ENCODE measurements at regions of chr20 and their contacts with region 1.

Region 1: GRCh38 chr20:43749734-43750294 is 23.0 kb upstream of the GTSF1L start:
- DNase-seq: peak; percentile 50 to 94 (median 72)
- ATAC-seq: peak; percentile 85
- H3K4me3 ChIP-seq: no peak overlapping the region
- H3K4me3 Mint-ChIP-seq: peak overlapping the region in 6 of 10 donors; percentile 29 to 54 (median 46)
- H3K27ac ChIP-seq: no peak overlapping the region
- H3K27ac Mint-ChIP-seq: peak overlapping the region in 6 of 9 donors; percentile 28 to 81 (median 51)
- H3K4me1 ChIP-seq: peaks cover 15 to 18% of the 10 kb centered on the region in 2 donors
- H3K4me1 Mint-ChIP-seq: peaks cover 22 to 44% (median 38%) of the 10 kb centered on the region in 7 donors
- H3K27me3 ChIP-seq: no peaks in the 10 kb centered on the region
- H3K27me3 Mint-ChIP-seq: peaks cover 0 to 18% (median 0%) of the 10 kb centered on the region in 5 donors

Region 2: GRCh38 chr20:43691928-43692524 is 57.8 kb before region 1 on chr20:
- CTCF ChIA-PET with region 1: interaction called, 6 read pairs
- POLR2A ChIA-PET with region 1: no interaction called
- intact Hi-C with region 1: loop called in 1 of 2 experiments (anchors 1 kb)
- DNase-seq: peak in 8 of 9 donors; percentile 12 to 62 (median 26)
- ATAC-seq: peak; percentile 73
- H3K4me3 ChIP-seq: no peak overlapping the region
- H3K4me3 Mint-ChIP-seq: no peak overlapping the region
- H3K27ac ChIP-seq: no peak overlapping the region
- H3K27ac Mint-ChIP-seq: peak overlapping the region in 1 of 9 donors; percentile 36
- H3K4me1 ChIP-seq: no peaks in the 10 kb centered on the region
- H3K4me1 Mint-ChIP-seq: peaks cover 0 to 5% (median 5%) of the 10 kb centered on the region in 7 donors
- H3K27me3 ChIP-seq: no peaks in the 10 kb centered on the region
- H3K27me3 Mint-ChIP-seq: no peaks in the 10 kb centered on the region

Region 3: GRCh38 chr20:43840382-43841070 is 90.7 kb after region 1 on chr20:
- CTCF ChIA-PET with region 1: interaction called, 3 read pairs
- POLR2A ChIA-PET with region 1: no interaction called
- intact Hi-C with region 1: loop called (anchors 1 to 10 kb)
- DNase-seq: peak in 6 of 9 donors; percentile 17 to 38 (median 23)
- ATAC-seq: peak; percentile 56
- H3K4me3 ChIP-seq: no peak overlapping the region
- H3K4me3 Mint-ChIP-seq: no peak overlapping the region
- H3K27ac ChIP-seq: no peak overlapping the region
- H3K27ac Mint-ChIP-seq: peak overlapping the region in 2 of 9 donors; percentile 67 to 74
- H3K4me1 ChIP-seq: peaks cover 0 to 11% of the 10 kb centered on the region in 2 donors
- H3K4me1 Mint-ChIP-seq: peaks cover 10 to 55% (median 18%) of the 10 kb centered on the region in 7 donors
- H3K27me3 ChIP-seq: no peaks in the 10 kb centered on the region
- H3K27me3 Mint-ChIP-seq: peaks cover 0 to 13% (median 0%) of the 10 kb centered on the region in 5 donors

Region 4: DNA sequence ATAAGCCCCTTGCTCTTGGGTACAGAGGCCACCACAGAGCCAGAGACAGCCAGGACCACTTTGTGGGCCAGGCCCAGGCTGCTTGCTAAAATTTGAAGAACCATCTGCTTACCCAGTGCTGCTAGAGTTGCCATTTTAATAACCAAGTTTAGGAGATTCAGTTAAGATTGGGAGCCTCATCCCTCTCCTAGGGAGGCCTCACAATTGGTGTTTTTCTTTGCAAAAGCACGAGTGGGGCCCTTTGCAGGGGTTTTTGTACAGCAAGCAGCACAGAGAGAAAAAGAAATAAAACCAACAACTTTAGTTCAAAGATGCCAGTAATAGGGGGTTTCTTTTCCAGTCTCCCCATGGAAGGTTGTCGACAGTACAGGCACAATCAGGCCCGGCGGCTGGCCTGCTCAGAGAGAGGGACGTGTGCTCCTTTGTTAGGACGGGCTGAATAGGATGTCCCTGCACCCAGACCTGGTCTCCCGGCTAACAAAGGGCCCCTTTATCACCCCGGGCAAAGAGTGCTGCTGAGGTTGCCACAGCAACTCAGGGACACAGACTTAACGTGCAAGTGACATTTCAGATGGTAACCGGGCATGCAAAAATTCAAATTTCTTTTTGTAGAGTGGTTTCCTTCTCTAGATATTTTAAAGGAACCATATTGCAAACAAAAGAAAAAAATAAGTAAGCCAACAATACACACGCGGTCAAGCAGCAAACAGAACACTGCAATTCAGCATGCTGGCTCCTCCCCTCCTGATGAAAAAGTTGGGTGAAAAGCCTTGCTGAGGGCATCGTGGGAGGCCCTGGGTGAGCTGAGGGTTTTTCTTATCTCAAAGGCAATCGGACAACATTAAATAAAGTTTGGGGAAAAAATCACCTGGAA is 154.4 kb after region 1 on chr20:
- CTCF ChIA-PET with region 1: no interaction called
- POLR2A ChIA-PET with region 1: no interaction called
- intact Hi-C with region 1: no loop called
- DNase-seq: no peak
- ATAC-seq: no peak
- H3K4me3 ChIP-seq: no peak overlapping the region
- H3K4me3 Mint-ChIP-seq: no peak overlapping the region
- H3K27ac ChIP-seq: no peak overlapping the region
- H3K27ac Mint-ChIP-seq: no peak overlapping the region
- H3K4me1 ChIP-seq: no peaks in the 10 kb centered on the region
- H3K4me1 Mint-ChIP-seq: no peaks in the 10 kb centered on the region
- H3K27me3 ChIP-seq: no peaks in the 10 kb centered on the region
- H3K27me3 Mint-ChIP-seq: peaks cover 0 to 11% (median 0%) of the 10 kb centered on the region in 5 donors

Region 5: DNA sequence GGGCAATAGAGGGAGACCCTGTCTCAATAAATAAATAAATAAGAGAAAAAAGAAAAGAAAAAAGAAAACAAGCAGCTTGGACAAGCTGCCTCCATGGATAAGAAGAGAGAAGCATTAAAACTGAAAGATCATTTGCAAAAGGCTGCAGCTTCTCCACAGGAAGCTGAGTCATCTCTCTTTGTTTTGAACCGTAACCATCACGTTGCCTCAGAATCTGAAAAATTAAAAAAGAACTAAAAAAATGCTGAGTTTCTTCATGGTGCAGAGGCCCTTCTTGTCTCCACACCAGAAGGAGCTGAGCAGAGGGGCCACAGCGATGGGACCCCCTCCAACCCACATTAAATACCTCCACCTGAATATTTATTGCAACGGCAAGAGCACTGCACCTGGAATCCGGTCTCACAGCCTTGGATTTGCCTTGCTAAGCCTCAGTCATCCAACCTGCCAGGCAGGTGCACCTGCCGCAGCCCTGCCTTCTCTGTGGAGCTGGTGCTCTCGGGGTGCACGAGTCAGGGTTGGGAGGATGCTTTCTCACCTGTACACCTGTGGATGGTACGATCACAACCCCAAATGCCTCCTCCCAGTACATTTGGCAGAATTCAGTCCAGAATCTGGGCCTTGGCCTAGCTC is 193.0 kb after region 1 on chr20:
- CTCF ChIA-PET with region 1: no interaction called
- POLR2A ChIA-PET with region 1: no interaction called
- intact Hi-C with region 1: loop called in 1 of 2 experiments (anchors 2 kb)
- DNase-seq: peak in 7 of 9 donors; percentile 28 to 56 (median 47)
- ATAC-seq: peak; percentile 72
- H3K4me3 ChIP-seq: no peak overlapping the region
- H3K4me3 Mint-ChIP-seq: peak overlapping the region; percentile 16 to 79 (median 46)
- H3K27ac ChIP-seq: peak overlapping the region; percentile 9
- H3K27ac Mint-ChIP-seq: peak overlapping the region; percentile 42 to 90 (median 72)
- H3K4me1 ChIP-seq: peaks cover 29% of the 10 kb centered on the region in 2 donors
- H3K4me1 Mint-ChIP-seq: peaks cover 61 to 92% (median 68%) of the 10 kb centered on the region in 7 donors
- H3K27me3 ChIP-seq: no peaks in the 10 kb centered on the region
- H3K27me3 Mint-ChIP-seq: peaks cover 0 to 27% (median 0%) of the 10 kb centered on the region in 5 donors

Region 6: GRCh38 chr20:44018259-44018941 is 268.6 kb after region 1 on chr20:
- CTCF ChIA-PET with region 1: no interaction called
- POLR2A ChIA-PET with region 1: no interaction called
- intact Hi-C with region 1: loop called in 1 of 2 experiments (anchors 5 kb)
- DNase-seq: no peak
- ATAC-seq: no peak
- H3K4me3 ChIP-seq: no peak overlapping the region
- H3K4me3 Mint-ChIP-seq: peak overlapping the region in 3 of 10 donors; percentile 5 to 83 (median 70)
- H3K27ac ChIP-seq: no peak overlapping the region
- H3K27ac Mint-ChIP-seq: peak overlapping the region in 1 of 9 donors; percentile 17
- H3K4me1 ChIP-seq: peaks cover 26 to 33% of the 10 kb centered on the region in 2 donors
- H3K4me1 Mint-ChIP-seq: peaks cover 21 to 56% (median 43%) of the 10 kb centered on the region in 7 donors
- H3K27me3 ChIP-seq: no peaks in the 10 kb centered on the region
- H3K27me3 Mint-ChIP-seq: peaks cover 0 to 69% (median 5%) of the 10 kb centered on the region in 5 donors

Region 7: DNA sequence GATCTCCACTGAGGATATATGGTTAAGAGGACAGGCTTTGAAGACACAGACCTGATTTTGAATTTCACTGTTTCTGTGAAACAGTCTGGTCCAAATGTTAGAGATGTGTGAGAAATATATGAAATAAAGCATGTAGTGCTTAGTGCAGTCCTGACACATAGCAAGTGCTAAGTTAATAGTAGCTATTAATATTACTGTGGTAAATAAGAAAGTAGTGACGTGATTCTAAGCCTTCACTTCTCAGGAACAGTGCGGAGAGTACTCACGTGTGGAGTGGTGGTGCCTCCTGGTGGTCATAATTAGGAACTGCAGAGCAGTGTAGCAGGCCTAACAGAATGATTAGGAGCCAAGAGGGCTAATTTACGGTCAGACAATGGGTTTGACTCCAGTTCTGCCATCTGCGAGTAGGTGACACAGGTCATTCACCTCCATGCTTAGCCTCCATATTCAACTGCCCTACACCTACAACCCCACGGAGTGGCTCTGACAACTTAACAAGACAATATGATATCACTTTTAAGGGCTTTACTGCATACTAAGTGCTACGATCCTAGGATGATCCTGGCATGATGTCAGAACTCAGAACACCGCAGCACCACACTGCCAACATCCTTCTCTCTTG is 330.9 kb after region 1 on chr20:
- CTCF ChIA-PET with region 1: interaction called, 21 read pairs
- POLR2A ChIA-PET with region 1: no interaction called
- intact Hi-C with region 1: loop called (anchors 1 kb)
- DNase-seq: peak; percentile 55 to 85 (median 79)
- ATAC-seq: peak; percentile 100
- H3K4me3 ChIP-seq: no peak overlapping the region
- H3K4me3 Mint-ChIP-seq: peak overlapping the region in 8 of 10 donors; percentile 0 to 48 (median 29)
- H3K27ac ChIP-seq: no peak overlapping the region
- H3K27ac Mint-ChIP-seq: peak overlapping the region in 8 of 9 donors; percentile 66 to 96 (median 86)
- H3K4me1 ChIP-seq: peaks cover 0 to 18% of the 10 kb centered on the region in 2 donors
- H3K4me1 Mint-ChIP-seq: peaks cover 13 to 38% (median 25%) of the 10 kb centered on the region in 7 donors
- H3K27me3 ChIP-seq: no peaks in the 10 kb centered on the region
- H3K27me3 Mint-ChIP-seq: peaks cover 0 to 4% (median 0%) of the 10 kb centered on the region in 5 donors